Head of caudate nucleus (tissue), 42 donors: ENCODE measurements at regions of chr14 and their contacts with region 1.

Region 1: GRCh38 chr14:105527661-105528581 is 1.5 kb downstream of the TMEM121 start:
- DNase-seq: peak; percentile 62 to 94 (median 88)

Region 2: DNA sequence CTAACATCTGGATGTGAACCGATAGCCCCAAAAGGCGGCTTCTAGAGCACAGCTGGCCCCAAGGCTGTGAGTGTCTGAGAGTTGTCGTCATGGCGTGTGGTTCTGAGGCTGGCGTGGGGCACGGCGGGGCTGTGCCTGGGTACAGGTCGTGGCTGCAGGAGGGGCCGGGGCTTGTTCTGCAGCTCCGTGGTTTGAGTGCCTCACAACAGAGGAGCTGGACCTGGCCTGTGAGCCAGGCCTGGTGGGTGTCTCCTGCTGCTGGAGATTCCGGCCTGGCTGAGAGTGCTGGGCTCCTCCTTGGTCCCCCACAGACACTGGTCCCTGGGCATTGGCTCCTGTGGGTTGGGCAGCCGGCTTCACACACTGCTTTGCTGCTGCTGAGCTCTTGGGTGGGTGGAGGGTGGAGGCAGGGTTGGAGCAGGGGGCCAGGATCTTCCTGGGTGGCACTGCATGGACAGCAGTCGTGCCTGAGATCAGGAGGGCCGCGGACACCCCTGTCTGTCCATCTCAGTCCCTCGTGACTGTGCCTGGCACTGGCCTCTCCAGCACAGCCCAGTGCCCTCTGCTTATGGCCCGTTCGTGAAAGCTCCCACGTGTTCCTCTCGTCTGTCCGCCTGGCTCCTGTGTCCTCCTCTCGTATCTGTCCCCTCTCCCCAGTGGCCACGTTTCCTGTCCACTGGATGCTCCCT is 161.4 kb before region 1 on chr14:
- intact Hi-C with region 1: loop called (anchors 2 kb)
- DNase-seq: peak in 17 of 42 donors; percentile 21 to 72 (median 57)

Region 3: DNA sequence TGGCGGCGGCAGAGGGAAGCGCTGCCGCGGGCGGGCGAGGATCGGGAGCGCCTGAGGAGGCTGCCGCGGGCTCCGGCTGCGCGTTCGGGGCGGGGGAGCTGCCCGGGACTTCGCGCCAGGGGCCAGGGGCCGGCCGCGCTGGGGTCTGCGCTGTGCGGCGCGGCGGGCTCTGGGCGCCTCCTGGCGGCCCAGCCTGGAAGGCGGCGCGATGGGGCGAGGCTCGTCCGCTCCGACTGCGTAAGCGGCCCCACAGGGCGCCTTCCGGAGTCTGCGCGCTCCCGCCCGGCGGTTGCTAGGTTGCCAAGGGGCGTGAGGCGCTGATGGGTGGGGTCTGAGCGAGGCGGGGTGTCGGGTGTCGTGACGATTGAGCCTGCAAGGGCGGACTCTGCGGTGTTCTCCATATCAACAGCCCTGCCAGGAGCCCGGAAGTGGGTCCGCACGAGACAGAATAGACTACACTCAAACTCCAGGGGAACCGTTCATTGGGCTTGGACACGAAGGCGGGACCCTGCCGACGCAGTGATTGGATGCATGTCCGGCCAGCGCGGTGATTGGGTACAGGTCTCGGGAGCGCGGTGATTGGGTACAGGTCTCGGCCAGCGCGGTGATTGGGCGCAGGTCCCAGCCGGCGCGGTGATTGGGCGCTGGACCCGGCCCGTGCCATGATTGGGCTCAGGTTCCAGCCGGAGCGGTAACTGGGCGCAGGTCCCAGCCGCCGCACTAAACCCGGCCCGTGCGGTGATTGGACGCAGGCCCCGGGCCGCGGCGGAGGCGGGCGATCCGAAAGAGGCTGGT is 37.2 kb before region 1 on chr14 and contains the start of gene TEDC1:
- intact Hi-C with region 1: loop called (anchors 5 kb)
- DNase-seq: peak; percentile 98 to 100 (median 100)

Region 4: DNA sequence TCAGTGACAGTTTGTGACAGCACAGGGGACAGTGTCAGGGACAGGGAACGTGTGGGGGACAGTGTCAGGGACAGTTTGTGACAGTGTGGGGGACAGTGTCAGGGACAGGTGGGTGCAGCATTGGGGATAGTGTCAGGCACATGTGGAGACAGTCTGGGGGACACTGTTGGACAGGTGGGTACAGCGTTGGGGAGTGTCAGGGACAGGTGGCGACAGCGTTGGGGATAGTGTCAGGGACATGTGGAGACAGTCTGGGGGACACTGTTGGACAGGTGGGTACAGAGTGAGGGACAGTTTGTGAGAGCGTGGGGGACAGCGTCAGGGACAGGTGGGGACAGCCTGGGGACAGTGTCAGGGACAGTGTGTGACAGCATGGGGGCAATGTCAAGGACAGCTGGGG is 138.5 kb after region 1 on chr14:
- intact Hi-C with region 1: no loop called
- DNase-seq: no peak